Esophagus muscularis mucosa (tissue), 4 donors: ENCODE measurements at regions of chr2 and their contacts with region 1.

Region 1: GRCh38 chr2:63841254-63842022 is at the start of gene UGP2:
- DNase-seq: peak; percentile 97
- H3K4me3 ChIP-seq: peak within 1 kb of the TSS; percentile 74 to 99 (median 90)
- H3K27ac ChIP-seq: peak within 1 kb of the TSS; percentile 92 to 98 (median 98)
- H3K4me1 ChIP-seq: peaks cover 34 to 46% (median 44%) of the 10 kb centered on the region in 4 donors
- H3K27me3 ChIP-seq: no peaks in the 10 kb centered on the region
- CTCF ChIP-seq: peak in 1 of 3 experiments; percentile 30
- EP300 ChIP-seq: no peak
- POLR2A ChIP-seq: peak; percentile 65
- total RNA-seq, gene UGP2: 163 to 247 (median 198) TPM

Region 2: GRCh38 chr2:63588385-63589147 is 252.9 kb before region 1 on chr2 and contains the starts of genes MDH1 and WDPCP:
- intact Hi-C with region 1: loop called (anchors 5 kb)
- DNase-seq: peak; percentile 97
- H3K4me3 ChIP-seq: peak within 1 kb of the TSS; percentile 75 to 92 (median 84)
- H3K27ac ChIP-seq: peak within 1 kb of the TSS; percentile 84 to 93 (median 91)
- H3K4me1 ChIP-seq: peaks cover 15 to 57% (median 54%) of the 10 kb centered on the region in 4 donors
- H3K27me3 ChIP-seq: no peaks in the 10 kb centered on the region
- CTCF ChIP-seq: no peak
- EP300 ChIP-seq: no peak
- POLR2A ChIP-seq: peak; percentile 7
- total RNA-seq, gene MDH1: 169 to 206 (median 182) TPM
- total RNA-seq, gene WDPCP: 7.8 to 23.7 (median 10.7) TPM